Stomach (tissue), 19 donors: ENCODE measurements at regions of chr6 and their contacts with region 1.

Region 1: DNA sequence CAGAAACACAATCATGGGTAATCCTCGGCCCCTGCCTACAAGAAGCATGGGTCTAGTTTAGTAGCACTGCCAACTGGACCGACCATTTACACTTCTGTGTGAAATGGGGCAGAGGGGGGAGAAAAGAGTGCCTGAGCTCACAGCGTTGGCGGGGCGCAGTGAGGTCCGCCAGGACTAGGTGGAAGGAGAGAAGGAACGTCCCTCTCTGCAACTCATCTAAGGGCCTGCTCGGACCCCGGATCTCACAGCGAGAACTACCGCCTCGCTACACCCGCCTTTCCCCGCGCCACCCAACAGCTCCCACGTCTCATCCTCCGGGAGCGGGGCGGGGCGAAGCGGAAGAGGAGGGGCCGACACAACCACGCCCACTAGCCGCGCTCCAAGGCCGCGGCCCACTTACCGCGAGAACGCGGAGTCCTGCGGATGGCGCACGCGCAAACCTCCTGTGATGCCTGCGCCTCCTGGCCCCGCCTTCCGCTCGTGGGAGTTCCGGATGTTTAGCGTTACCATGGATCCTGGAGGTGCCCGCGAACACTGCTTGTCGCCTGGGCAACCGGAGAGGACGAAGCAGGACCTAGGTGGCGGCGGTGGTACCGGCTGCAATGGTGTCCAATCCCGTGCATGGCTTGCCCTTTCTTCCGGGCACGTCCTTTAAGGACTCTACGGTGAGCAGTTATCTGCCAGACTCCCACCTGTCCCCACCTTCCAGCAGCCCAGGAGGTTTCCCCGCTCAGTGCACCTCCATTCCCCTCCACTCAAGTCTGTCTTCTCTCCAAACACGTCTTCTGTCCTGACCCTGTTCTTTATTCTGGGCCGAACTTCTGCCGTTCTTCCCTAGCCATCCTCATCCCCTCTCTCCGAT is at the start of gene EFHC1:
- DNase-seq: peak; percentile 99 to 100
- H3K4me3 ChIP-seq: peak within 1 kb of the TSS; percentile 70 to 90 (median 80)
- H3K27ac ChIP-seq: peak within 1 kb of the TSS; percentile 76 to 92 (median 84)
- H3K4me1 ChIP-seq: peaks cover 4 to 44% (median 33%) of the 10 kb centered on the region in 4 donors
- H3K27me3 ChIP-seq: no peaks in the 10 kb centered on the region
- CTCF ChIP-seq: no peak
- EP300 ChIP-seq: no peak
- POLR2A ChIP-seq: peak in 2 of 4 donors; percentile 40 to 55
- total RNA-seq, gene EFHC1: 9.3 to 54.3 (median 50.4) TPM

Region 2: GRCh38 chr6:52497652-52498408 is 77.8 kb after region 1 on chr6:
- intact Hi-C with region 1: loop called (anchors 10 kb)
- DNase-seq: no peak
- H3K4me3 ChIP-seq: no peak overlapping the region
- H3K27ac ChIP-seq: peak overlapping the region in 2 of 5 donors; percentile 53 to 56
- H3K4me1 ChIP-seq: peaks cover 0 to 28% (median 13%) of the 10 kb centered on the region in 4 donors
- H3K27me3 ChIP-seq: no peaks in the 10 kb centered on the region
- CTCF ChIP-seq: no peak
- EP300 ChIP-seq: no peak
- POLR2A ChIP-seq: no peak

Region 3: DNA sequence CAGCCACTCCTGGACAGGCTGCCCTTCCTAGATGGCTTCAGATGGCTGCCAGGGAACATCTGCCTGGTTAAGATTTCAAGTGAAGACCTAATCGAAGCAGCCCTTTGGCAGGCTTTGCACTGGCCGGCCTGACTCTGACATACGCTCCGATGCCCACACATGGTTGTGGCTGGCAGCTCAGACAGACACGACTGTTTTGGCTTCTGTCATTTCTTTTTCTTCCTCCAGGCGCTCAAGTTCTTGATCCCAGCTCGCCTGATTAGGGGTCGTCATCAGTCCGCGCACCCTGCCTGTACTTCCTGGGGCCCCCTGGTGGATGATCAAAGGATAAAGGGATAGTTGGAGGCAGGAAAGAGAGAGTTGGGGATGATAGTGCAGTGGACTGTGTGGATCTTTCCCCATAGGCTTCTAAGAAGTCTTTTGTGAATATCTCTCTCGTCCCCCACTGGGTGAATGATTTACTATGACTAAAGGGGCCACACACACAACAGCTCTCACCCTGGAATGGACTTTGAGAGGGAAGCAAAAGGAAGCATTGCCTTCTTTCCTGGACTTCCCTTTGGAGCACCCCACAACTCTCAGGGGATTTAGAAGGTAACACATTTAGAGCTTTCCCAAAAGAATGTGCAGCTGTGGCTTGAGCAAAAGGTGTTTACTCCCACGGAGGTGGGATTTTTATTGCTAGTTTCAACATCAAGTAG is 178.2 kb after region 1 on chr6:
- intact Hi-C with region 1: loop called (anchors 10 kb)
- DNase-seq: peak; percentile 46 to 88
- H3K4me3 ChIP-seq: peak overlapping the region in 1 of 4 donors; percentile 17
- H3K27ac ChIP-seq: peak overlapping the region in 3 of 5 donors; percentile 25 to 78 (median 78)
- H3K4me1 ChIP-seq: peaks cover 0 to 41% (median 25%) of the 10 kb centered on the region in 4 donors
- H3K27me3 ChIP-seq: no peaks in the 10 kb centered on the region
- CTCF ChIP-seq: peak in 5 of 7 experiments; percentile 28 to 73 (median 60)
- EP300 ChIP-seq: no peak
- POLR2A ChIP-seq: no peak

Region 4: DNA sequence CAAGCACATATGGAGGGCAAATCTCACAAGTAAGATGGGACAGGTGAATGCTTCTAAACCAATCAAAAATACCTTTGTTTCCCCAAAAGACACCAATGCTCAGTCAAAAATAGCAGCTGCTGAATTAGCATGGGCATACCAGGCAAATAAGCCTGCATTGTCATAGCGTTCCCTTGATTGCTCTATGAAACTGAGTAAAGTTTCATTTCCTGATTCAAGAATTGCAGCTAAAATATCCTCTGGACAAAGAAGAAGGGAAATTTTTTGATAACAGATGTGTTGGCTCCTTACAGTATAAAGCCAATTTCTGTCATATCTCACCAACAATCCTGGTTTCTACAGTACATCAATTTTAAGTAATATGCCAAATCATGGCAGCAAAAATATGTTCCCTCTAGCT is 247.5 kb after region 1 on chr6:
- intact Hi-C with region 1: loop called (anchors 5 kb)
- DNase-seq: no peak
- H3K4me3 ChIP-seq: no peak overlapping the region
- H3K27ac ChIP-seq: no peak overlapping the region
- H3K4me1 ChIP-seq: peaks cover 8 to 55% (median 48%) of the 10 kb centered on the region in 4 donors
- H3K27me3 ChIP-seq: no peaks in the 10 kb centered on the region
- CTCF ChIP-seq: no peak
- EP300 ChIP-seq: no peak
- POLR2A ChIP-seq: no peak